ENCODE measurements at regions of chr4 and their contacts with region 1.

Region 1: GRCh38 chr4:56055027-56055977 is 106.6 kb downstream of the CEP135 start:
- DNase-seq: no peak
- H3K4me3 ChIP-seq: no peak overlapping the region
- H3K27ac ChIP-seq: no peak overlapping the region
- H3K4me1 ChIP-seq: peaks cover 34% of the 10 kb centered on the region
- CTCF ChIP-seq: no peak

Region 2: GRCh38 chr4:56821381-56822243 is 766.3 kb after region 1 on chr4 and contains the start of gene SPINK2:
- CTCF ChIA-PET with region 1: no interaction called
- POLR2A ChIA-PET with region 1: no interaction called
- intact Hi-C with region 1: loop called (anchors 10 kb)
- DNase-seq: peak; percentile 75
- H3K4me3 ChIP-seq: peak within 1 kb of the TSS; percentile 66
- H3K27ac ChIP-seq: no peak within 1 kb of the TSS
- H3K4me1 ChIP-seq: peaks cover 22% of the 10 kb centered on the region
- CTCF ChIP-seq: peak; percentile 60
- total RNA-seq, gene SPINK2: 9.5 and 15.1 TPM in 2 replicates

Measured in OCI-LY7 (cell line).